Activated naive CD4-positive, alpha-beta T cell treated with anti-CD3 and anti-CD28 coated beads for 36 hours (primary cell): ENCODE measurements at regions of chr10 and their contacts with region 1.

Region 1: GRCh38 chr10:110225756-110226542 is 18.5 kb downstream of the MXI1 start:
- DNase-seq: peak; percentile 93
- H3K4me3 Mint-ChIP-seq: peak overlapping the region; percentile 97
- H3K27ac Mint-ChIP-seq: peak overlapping the region; percentile 94
- H3K4me1 Mint-ChIP-seq: peaks cover 47% of the 10 kb centered on the region
- H3K27me3 Mint-ChIP-seq: no peaks in the 10 kb centered on the region

Region 2: GRCh38 chr10:109922976-109923921 is 302.7 kb before region 1 on chr10 and contains the start of gene XPNPEP1:
- CTCF ChIA-PET with region 1: no interaction called
- intact Hi-C with region 1: loop called (anchors 2 kb)
- DNase-seq: peak; percentile 86
- H3K4me3 Mint-ChIP-seq: peak within 1 kb of the TSS; percentile 84
- H3K27ac Mint-ChIP-seq: peak within 1 kb of the TSS; percentile 81
- H3K4me1 Mint-ChIP-seq: peaks cover 53% of the 10 kb centered on the region
- H3K27me3 Mint-ChIP-seq: no peaks in the 10 kb centered on the region
- total RNA-seq, gene XPNPEP1: 52.2 to 52.6 TPM

Region 3: GRCh38 chr10:110252151-110252550 is 26.2 kb after region 1 on chr10:
- CTCF ChIA-PET with region 1: no interaction called
- intact Hi-C with region 1: loop called (anchors 1 kb)
- DNase-seq: no peak
- H3K4me3 Mint-ChIP-seq: no peak overlapping the region
- H3K27ac Mint-ChIP-seq: no peak overlapping the region
- H3K4me1 Mint-ChIP-seq: peaks cover 41% of the 10 kb centered on the region
- H3K27me3 Mint-ChIP-seq: peaks cover 8% of the 10 kb centered on the region

Region 4: GRCh38 chr10:110273474-110273873 is 47.5 kb after region 1 on chr10:
- CTCF ChIA-PET with region 1: interaction called, 6 read pairs
- intact Hi-C with region 1: loop called (anchors 1 kb)
- DNase-seq: peak; percentile 74
- H3K4me3 Mint-ChIP-seq: no peak overlapping the region
- H3K27ac Mint-ChIP-seq: no peak overlapping the region
- H3K4me1 Mint-ChIP-seq: peaks cover 49% of the 10 kb centered on the region
- H3K27me3 Mint-ChIP-seq: no peaks in the 10 kb centered on the region

Region 5: DNA sequence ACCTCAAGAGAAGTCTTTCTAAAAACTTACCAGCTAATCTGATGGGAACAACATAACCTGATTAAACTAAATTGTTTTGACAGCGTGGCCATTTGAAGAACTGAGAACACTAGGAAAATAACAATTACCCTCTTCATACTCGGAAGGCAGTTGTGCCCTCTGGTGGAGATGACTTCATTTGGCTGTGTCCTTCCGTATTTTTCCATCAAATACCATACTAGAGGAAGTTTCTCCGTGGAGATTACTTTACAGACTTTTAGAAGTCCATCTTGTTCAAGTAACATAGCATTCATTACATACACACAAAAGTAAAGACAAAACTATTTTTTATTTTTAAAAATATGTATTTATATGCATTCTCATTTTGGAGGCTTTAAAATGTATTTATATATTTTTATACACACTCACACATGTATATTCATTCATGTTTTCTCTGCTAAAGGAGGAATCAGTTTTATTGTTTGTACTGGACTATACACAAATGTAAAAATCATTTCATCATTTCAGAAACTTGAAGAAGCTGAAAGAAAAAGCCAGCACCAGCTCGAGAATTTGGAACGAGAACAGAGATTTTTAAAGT is 53.5 kb after region 1 on chr10:
- CTCF ChIA-PET with region 1: interaction called, 6 read pairs
- intact Hi-C with region 1: loop called (anchors 1 kb)
- DNase-seq: peak; percentile 69
- H3K4me3 Mint-ChIP-seq: no peak overlapping the region
- H3K27ac Mint-ChIP-seq: no peak overlapping the region
- H3K4me1 Mint-ChIP-seq: peaks cover 18% of the 10 kb centered on the region
- H3K27me3 Mint-ChIP-seq: no peaks in the 10 kb centered on the region

Region 6: GRCh38 chr10:110502851-110503301 is 276.9 kb after region 1 on chr10:
- CTCF ChIA-PET with region 1: no interaction called
- intact Hi-C with region 1: loop called (anchors 2 kb)
- DNase-seq: peak; percentile 66
- H3K4me3 Mint-ChIP-seq: peak overlapping the region; percentile 97
- H3K27ac Mint-ChIP-seq: peak overlapping the region; percentile 85
- H3K4me1 Mint-ChIP-seq: peaks cover 74% of the 10 kb centered on the region
- H3K27me3 Mint-ChIP-seq: no peaks in the 10 kb centered on the region

Region 7: GRCh38 chr10:110567201-110568054 is 341.5 kb after region 1 on chr10 and contains the start of gene SMC3:
- CTCF ChIA-PET with region 1: no interaction called
- intact Hi-C with region 1: loop called (anchors 1 kb)
- DNase-seq: peak; percentile 95
- H3K4me3 Mint-ChIP-seq: peak within 1 kb of the TSS; percentile 87
- H3K27ac Mint-ChIP-seq: peak within 1 kb of the TSS; percentile 98
- H3K4me1 Mint-ChIP-seq: peaks cover 31% of the 10 kb centered on the region
- H3K27me3 Mint-ChIP-seq: peaks cover 5% of the 10 kb centered on the region
- total RNA-seq, gene SMC3: 81.3 to 85.0 TPM